ENCODE measurements at regions of chr17 and their contacts with region 1.

Region 1: DNA sequence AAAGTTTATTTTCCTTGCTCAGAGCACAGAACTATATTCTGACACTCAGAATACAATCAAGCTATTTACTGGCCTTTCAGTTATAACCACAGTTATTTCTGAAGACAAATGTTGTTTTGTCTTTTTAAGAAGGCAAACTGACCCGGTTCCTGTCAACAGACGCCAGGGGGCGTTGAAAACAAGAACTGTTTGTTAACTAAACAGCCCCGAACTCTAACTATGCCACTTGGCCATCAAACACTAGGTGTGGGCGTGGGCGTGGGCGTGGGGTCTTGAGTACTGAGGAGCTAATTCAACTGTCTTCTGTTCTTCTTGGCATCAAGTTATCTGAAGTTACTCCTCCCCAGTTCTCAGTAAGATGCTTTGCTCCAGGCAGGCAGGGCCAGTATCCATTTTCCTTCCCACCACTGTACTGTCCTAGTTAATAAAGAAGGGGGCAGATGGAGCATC is 63.2 kb upstream of the MTMR4 start:
- DNase-seq: no peak
- ATAC-seq: peak; percentile 82
- H3K4me3 ChIP-seq: no peak overlapping the region
- H3K27ac ChIP-seq: no peak overlapping the region
- H3K4me1 ChIP-seq: peaks cover 11% of the 10 kb centered on the region
- H3K27me3 ChIP-seq: no peaks in the 10 kb centered on the region
- CTCF ChIP-seq: peak; percentile 63 to 84 (median 77)
- EP300 ChIP-seq: no peak
- POLR2A ChIP-seq: no peak
- RAD21 ChIP-seq: peak; percentile 52

Region 2: DNA sequence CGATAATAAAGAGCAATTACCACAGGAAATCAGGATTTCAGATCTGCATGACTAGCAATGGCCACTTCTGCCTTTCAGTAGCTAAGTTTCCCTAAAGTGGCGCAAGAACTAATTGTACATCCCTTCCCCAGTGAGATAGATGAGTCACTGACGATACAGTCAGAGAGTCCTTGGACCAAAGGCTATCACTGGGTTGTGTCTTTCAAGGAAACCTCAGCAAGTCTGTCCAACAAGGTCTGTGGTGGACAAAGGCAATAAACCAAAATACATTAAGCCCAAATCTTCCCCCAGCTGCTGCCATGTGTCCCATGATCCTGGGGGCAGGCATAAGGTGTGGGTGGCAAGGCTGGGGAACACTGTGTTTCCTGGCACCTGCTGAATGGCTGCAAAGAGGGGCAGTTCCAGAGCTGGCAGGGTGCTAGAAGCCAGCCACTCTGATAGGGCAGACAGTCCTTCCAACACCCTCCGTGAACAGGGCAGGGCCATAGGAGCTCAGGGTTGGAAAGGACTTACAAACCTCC is 42.7 kb before region 1 on chr17:
- CTCF ChIA-PET with region 1: interaction called, 45 read pairs
- POLR2A ChIA-PET with region 1: interaction called, 8 read pairs
- RAD21 ChIA-PET with region 1: interaction called, 4 read pairs
- SMC1A ChIA-PET with region 1: interaction called, 4 read pairs
- in situ Hi-C with region 1: no loop called
- intact Hi-C with region 1: no loop called
- DNase-seq: no peak
- ATAC-seq: no peak
- H3K4me3 ChIP-seq: no peak overlapping the region
- H3K27ac ChIP-seq: no peak overlapping the region
- H3K4me1 ChIP-seq: no peaks in the 10 kb centered on the region
- H3K27me3 ChIP-seq: peaks cover 4 to 6% of the 10 kb centered on the region in 2 experiments; a peak in 3 of 4 replicates
- CTCF ChIP-seq: no peak
- EP300 ChIP-seq: no peak
- POLR2A ChIP-seq: no peak
- RAD21 ChIP-seq: no peak

Region 3: GRCh38 chr17:58556833-58557250 is 20.8 kb before region 1 on chr17:
- CTCF ChIA-PET with region 1: interaction called, 11 read pairs
- POLR2A ChIA-PET with region 1: interaction called, 3 read pairs
- RAD21 ChIA-PET with region 1: interaction called, 5 read pairs
- SMC1A ChIA-PET with region 1: interaction called, 8 read pairs
- in situ Hi-C with region 1: no loop called
- intact Hi-C with region 1: no loop called
- DNase-seq: no peak
- ATAC-seq: peak; percentile 77
- H3K4me3 ChIP-seq: no peak overlapping the region
- H3K27ac ChIP-seq: no peak overlapping the region
- H3K4me1 ChIP-seq: peaks cover 6% of the 10 kb centered on the region
- H3K27me3 ChIP-seq: no peaks in the 10 kb centered on the region
- CTCF ChIP-seq: no peak
- EP300 ChIP-seq: no peak
- POLR2A ChIP-seq: no peak
- RAD21 ChIP-seq: no peak

Region 4: DNA sequence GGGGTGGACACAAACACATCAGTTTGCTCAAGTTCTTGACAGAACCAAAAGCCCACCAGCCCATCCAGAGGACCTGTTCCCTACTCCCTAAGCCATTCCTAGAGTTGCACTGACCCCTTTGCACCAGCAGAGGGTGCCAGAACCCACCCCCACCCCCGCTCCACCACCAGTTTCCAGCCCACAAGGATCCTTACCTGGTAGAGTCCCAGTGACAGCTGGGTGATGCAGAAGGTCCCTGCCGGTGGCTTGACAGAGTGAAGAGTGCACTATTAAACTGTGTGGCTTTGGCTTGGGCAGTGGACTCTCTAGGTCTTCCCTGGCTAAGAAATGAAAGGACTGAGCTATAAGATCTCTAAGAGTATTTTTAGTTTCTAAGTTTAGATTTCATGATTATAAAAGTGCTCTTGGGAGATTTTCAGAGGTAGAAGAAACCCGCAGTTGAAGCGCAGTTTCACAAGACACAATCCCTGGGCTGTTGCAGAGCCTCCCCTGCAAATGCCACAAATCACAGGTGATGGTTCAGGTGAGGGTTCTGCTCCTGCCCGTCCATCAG is 10.1 kb after region 1 on chr17:
- CTCF ChIA-PET with region 1: interaction called, 65 read pairs
- POLR2A ChIA-PET with region 1: interaction called, 3 read pairs
- RAD21 ChIA-PET with region 1: interaction called, 10 read pairs
- SMC1A ChIA-PET with region 1: interaction called, 22 read pairs
- in situ Hi-C with region 1: no loop called
- intact Hi-C with region 1: no loop called
- DNase-seq: no peak
- ATAC-seq: peak; percentile 92
- H3K4me3 ChIP-seq: no peak overlapping the region
- H3K27ac ChIP-seq: no peak overlapping the region
- H3K4me1 ChIP-seq: no peaks in the 10 kb centered on the region
- H3K27me3 ChIP-seq: no peaks in the 10 kb centered on the region
- CTCF ChIP-seq: peak; percentile 94 to 97 (median 97)
- EP300 ChIP-seq: no peak
- POLR2A ChIP-seq: no peak
- RAD21 ChIP-seq: peak; percentile 95

Region 5: DNA sequence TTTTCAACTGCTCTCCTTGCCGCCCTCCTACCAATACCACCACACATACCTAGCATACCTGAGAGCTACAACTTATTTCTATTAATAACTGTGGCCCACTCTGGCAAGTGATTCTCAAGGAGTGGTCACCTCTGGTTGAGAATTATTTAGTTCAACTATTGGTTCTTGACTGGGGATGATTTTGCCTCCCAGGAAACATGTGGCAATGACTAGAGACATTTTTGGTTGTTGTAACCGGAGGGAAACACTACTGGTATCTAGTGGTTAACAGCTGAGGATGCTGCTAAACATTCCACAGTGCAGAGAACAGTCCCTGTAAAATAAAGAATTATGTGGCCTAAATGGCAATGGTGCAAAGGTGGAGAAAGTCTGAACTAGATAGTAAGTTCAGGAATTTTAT is 432.4 kb after region 1 on chr17:
- CTCF ChIA-PET with region 1: interaction called, 52 read pairs
- POLR2A ChIA-PET with region 1: interaction called, 5 read pairs
- RAD21 ChIA-PET with region 1: interaction called, 24 read pairs
- SMC1A ChIA-PET with region 1: interaction called, 53 read pairs
- in situ Hi-C with region 1: loop called (anchors 5 kb)
- intact Hi-C with region 1: loop called (anchors 1 kb)
- DNase-seq: no peak
- ATAC-seq: no peak
- H3K4me3 ChIP-seq: no peak overlapping the region
- H3K27ac ChIP-seq: no peak overlapping the region
- H3K4me1 ChIP-seq: no peaks in the 10 kb centered on the region
- H3K27me3 ChIP-seq: no peaks in the 10 kb centered on the region
- CTCF ChIP-seq: no peak
- EP300 ChIP-seq: no peak
- POLR2A ChIP-seq: no peak
- RAD21 ChIP-seq: no peak

Measured in GM12878 (cell line).